Sciatic nerve (tissue), 2 donors: ENCODE measurements at regions of chr1 and their contacts with region 1.

Region 1: DNA sequence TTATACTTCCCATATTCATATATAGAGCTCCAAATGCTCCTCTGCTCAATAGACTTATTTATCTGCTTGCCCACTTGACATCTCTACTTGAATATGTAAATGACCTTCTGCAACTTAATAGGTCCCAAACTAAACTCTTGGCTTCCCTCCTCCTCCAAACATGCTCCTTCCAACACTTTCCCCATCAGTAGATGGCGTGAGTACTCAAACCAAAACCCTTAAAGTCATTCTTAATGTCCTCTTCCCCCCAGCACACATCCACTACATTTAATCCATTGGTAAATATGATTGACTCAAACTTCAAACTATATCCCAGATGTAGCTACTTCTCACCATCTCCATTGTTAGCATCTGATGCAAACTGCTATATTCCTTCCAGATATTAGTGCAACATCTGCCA is 48.5 kb upstream of the PBX1 start:
- DNase-seq: no peak
- ATAC-seq: no peak

Region 2: GRCh38 chr1:162944974-162945674 is 1565.3 kb before region 1 on chr1:
- intact Hi-C with region 1: loop called (anchors 5 kb)
- DNase-seq: no peak
- ATAC-seq: no peak

Region 3: GRCh38 chr1:164356511-164356910 is 153.9 kb before region 1 on chr1:
- intact Hi-C with region 1: no loop called
- DNase-seq: no peak
- ATAC-seq: no peak

Region 4: DNA sequence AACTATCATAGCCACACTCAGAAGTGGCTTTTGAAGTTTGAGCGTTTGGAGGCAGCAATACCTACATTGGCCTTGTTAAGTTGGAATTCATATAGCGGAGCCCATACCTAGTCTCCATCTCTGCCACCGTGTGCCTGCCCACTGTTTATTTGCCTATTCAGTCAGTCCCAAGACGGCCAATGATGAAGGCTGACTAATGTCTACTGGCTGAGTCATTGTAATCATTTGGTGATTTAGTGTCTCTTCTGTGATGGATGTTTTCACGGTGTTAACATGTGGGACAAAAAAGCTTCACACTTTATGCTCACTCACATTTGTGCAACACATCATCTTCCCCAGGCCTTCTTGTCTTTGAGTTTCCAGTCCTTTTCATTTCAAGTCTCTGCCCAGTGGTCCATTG is 44.0 kb before region 1 on chr1:
- intact Hi-C with region 1: no loop called
- DNase-seq: no peak
- ATAC-seq: no peak